ENCODE measurements at regions of chr6 and their contacts with region 1.

Region 1: GRCh38 chr6:148166339-148166968 is 176.2 kb upstream of the SASH1 start:
- DNase-seq: peak; percentile 70
- ATAC-seq: peak; percentile 38; the same call in 1 of the 2 replicates
- H3K4me3 ChIP-seq: no peak overlapping the region
- H3K27ac ChIP-seq: no peak overlapping the region
- H3K4me1 ChIP-seq: no peaks in the 10 kb centered on the region
- H3K27me3 ChIP-seq: no peaks in the 10 kb centered on the region
- CTCF ChIP-seq: peak; percentile 73

Region 2: GRCh38 chr6:147390909-147391536 is 775.4 kb before region 1 on chr6:
- CTCF ChIA-PET with region 1: no interaction called
- POLR2A ChIA-PET with region 1: no interaction called
- intact Hi-C with region 1: loop called (anchors 1 kb)
- DNase-seq: peak; percentile 39
- ATAC-seq: no peak
- H3K4me3 ChIP-seq: no peak overlapping the region
- H3K27ac ChIP-seq: no peak overlapping the region
- H3K4me1 ChIP-seq: no peaks in the 10 kb centered on the region
- H3K27me3 ChIP-seq: no peaks in the 10 kb centered on the region
- CTCF ChIP-seq: peak; percentile 55

Region 3: DNA sequence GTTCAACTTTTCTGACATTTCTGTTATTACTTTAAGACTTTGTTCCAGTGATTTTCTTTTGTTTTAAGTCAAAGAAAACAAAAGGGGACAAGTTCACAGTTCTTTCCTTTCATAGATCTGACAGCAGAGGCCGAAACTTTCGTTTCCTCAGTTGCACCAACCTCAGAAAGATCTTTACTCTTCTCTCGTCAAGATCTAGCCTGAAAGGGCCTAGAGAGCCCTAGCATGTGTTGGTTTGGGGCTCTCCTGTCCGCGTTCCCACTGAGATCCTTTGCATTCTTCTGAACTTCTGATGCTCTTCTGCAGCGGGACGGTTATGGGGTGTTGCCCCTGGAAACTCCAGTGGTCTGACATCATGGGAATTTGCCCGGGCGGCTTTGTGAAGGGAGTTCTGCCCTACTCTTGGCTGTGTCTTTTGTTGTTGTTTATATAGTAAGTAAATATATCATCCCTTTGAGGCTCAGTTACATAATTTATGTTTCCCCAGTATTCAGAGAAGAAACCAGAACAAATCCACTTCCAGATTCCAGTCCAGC is 305.2 kb after region 1 on chr6:
- CTCF ChIA-PET with region 1: no interaction called
- POLR2A ChIA-PET with region 1: no interaction called
- intact Hi-C with region 1: no loop called
- DNase-seq: no peak
- ATAC-seq: no peak
- H3K4me3 ChIP-seq: no peak overlapping the region
- H3K27ac ChIP-seq: no peak overlapping the region
- H3K4me1 ChIP-seq: no peaks in the 10 kb centered on the region
- H3K27me3 ChIP-seq: no peaks in the 10 kb centered on the region
- CTCF ChIP-seq: no peak

Measured in PC-3 (cell line).